PC-9 (cell line): ENCODE measurements at regions of chr6 and their contacts with region 1.

Region 1: GRCh38 chr6:47787620-47788497 is 6.0 kb downstream of the OPN5 start:
- DNase-seq: peak; percentile 43 to 51
- H3K4me3 ChIP-seq: no peak overlapping the region
- H3K27ac ChIP-seq: no peak overlapping the region
- H3K4me1 ChIP-seq: no peaks in the 10 kb centered on the region
- H3K27me3 ChIP-seq: no peaks in the 10 kb centered on the region
- CTCF ChIP-seq: peak; percentile 96

Region 2: GRCh38 chr6:47047479-47048407 is 740.1 kb before region 1 on chr6:
- CTCF ChIA-PET with region 1: no interaction called
- POLR2A ChIA-PET with region 1: no interaction called
- intact Hi-C with region 1: no loop called
- DNase-seq: peak; percentile 72 to 99
- H3K4me3 ChIP-seq: no peak overlapping the region; the same call in 1 of the 2 replicates
- H3K27ac ChIP-seq: peak overlapping the region; percentile 98
- H3K4me1 ChIP-seq: peaks cover 60% of the 10 kb centered on the region
- H3K27me3 ChIP-seq: no peaks in the 10 kb centered on the region
- CTCF ChIP-seq: peak; percentile 80

Region 3: GRCh38 chr6:47967843-47968242 is 180.0 kb after region 1 on chr6:
- CTCF ChIA-PET with region 1: no interaction called
- POLR2A ChIA-PET with region 1: no interaction called
- intact Hi-C with region 1: no loop called
- DNase-seq: no peak
- H3K4me3 ChIP-seq: no peak overlapping the region
- H3K27ac ChIP-seq: no peak overlapping the region
- H3K4me1 ChIP-seq: no peaks in the 10 kb centered on the region
- H3K27me3 ChIP-seq: no peaks in the 10 kb centered on the region
- CTCF ChIP-seq: no peak

Region 4: DNA sequence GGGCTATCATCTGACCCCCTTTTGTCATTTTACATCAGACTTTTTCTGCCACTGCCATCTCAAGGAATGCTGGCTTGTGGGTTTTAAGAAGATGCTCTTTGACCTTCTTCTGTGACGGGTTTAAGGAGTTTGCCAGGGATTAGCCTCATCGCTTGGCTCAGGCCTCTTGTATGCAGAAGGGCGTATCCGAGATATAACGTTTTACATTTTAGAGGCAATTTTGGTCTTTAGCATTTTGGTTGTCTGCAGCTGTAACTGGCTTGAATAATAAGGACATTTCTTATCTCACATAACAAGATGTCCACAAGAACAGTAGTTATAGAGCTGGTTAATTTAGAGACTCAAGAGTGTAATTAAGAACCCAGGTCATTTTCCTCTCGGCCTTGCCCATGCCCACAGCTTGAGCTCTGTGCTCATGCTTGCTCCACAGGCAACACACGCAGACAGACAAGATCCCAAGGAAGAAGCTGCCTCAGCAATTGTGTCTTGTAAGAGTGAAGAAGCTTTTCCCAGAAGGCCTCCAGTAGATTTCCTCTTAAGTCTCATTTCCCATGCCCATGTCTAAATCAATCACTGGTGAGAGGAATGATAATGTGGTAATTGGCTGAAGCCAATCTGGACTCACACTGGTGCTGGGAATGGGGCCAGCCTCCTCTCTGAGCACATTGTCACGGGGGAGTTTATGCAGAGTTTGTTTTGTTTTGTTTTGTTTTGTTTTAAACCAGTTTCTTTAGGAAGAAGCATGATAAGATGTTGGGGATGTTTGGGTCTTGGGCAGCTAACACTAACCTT is 286.3 kb after region 1 on chr6:
- CTCF ChIA-PET with region 1: no interaction called
- POLR2A ChIA-PET with region 1: no interaction called
- intact Hi-C with region 1: loop called (anchors 10 kb)
- DNase-seq: no peak
- H3K4me3 ChIP-seq: no peak overlapping the region
- H3K27ac ChIP-seq: no peak overlapping the region
- H3K4me1 ChIP-seq: peaks cover 14% of the 10 kb centered on the region
- H3K27me3 ChIP-seq: no peaks in the 10 kb centered on the region
- CTCF ChIP-seq: no peak

Region 5: GRCh38 chr6:49423817-49424216 is 1636.0 kb after region 1 on chr6:
- CTCF ChIA-PET with region 1: interaction called, 3 read pairs
- POLR2A ChIA-PET with region 1: no interaction called
- intact Hi-C with region 1: loop called (anchors 1 kb)
- DNase-seq: no peak
- H3K4me3 ChIP-seq: no peak overlapping the region
- H3K27ac ChIP-seq: no peak overlapping the region
- H3K4me1 ChIP-seq: no peaks in the 10 kb centered on the region
- H3K27me3 ChIP-seq: no peaks in the 10 kb centered on the region
- CTCF ChIP-seq: peak; percentile 59